Natural killer cell (primary cell): ENCODE measurements at regions of chr18 and their contacts with region 1.

Region 1: GRCh38 chr18:63161761-63162195 is 157.8 kb downstream of the BCL2 start:
- DNase-seq: peak; percentile 70 to 92
- ATAC-seq: peak; percentile 83 to 90 (median 87)
- H3K4me3 ChIP-seq: no peak overlapping the region
- H3K4me3 Mint-ChIP-seq: peak overlapping the region; percentile 77
- H3K27ac ChIP-seq: peak overlapping the region; percentile 97
- H3K27ac Mint-ChIP-seq: peak overlapping the region; percentile 93 to 96
- H3K4me1 ChIP-seq: peaks cover 60% of the 10 kb centered on the region
- H3K4me1 Mint-ChIP-seq: peaks cover 57 to 61% of the 10 kb centered on the region in 2 donors
- H3K27me3 ChIP-seq: no peaks in the 10 kb centered on the region
- H3K27me3 Mint-ChIP-seq: no peaks in the 10 kb centered on the region
- CTCF ChIP-seq: no peak

Region 2: DNA sequence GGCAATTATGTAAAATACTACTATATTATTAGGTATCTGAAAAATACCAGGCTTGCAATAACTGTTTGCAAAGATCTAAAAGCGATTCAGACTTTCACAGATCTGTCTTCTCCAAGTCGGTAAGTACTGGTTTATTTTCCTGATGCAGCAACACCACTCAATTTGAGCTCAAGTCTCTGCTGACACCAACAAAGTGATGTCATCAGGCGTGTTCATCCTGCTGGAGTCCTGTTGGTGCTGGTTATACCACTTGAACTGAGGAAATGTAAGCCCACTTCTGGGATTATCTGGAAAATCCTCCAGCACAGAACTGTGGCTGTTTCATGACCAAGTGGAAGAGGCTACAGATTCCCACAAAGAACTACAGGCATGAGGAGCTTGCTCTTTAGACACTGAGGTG is 109.8 kb before region 1 on chr18:
- intact Hi-C with region 1: loop called (anchors 2 kb)
- DNase-seq: no peak
- ATAC-seq: no peak
- H3K4me3 ChIP-seq: no peak overlapping the region
- H3K4me3 Mint-ChIP-seq: peak overlapping the region; percentile 83
- H3K27ac ChIP-seq: peak overlapping the region; percentile 68
- H3K27ac Mint-ChIP-seq: peak overlapping the region; percentile 87 to 92
- H3K4me1 ChIP-seq: peaks cover 34% of the 10 kb centered on the region
- H3K4me1 Mint-ChIP-seq: peaks cover 42 to 43% of the 10 kb centered on the region in 2 donors
- H3K27me3 ChIP-seq: no peaks in the 10 kb centered on the region
- H3K27me3 Mint-ChIP-seq: no peaks in the 10 kb centered on the region
- CTCF ChIP-seq: no peak

Region 3: GRCh38 chr18:63192885-63193349 is 31.1 kb after region 1 on chr18:
- intact Hi-C with region 1: loop called (anchors 1 kb)
- DNase-seq: peak in 1 of 2 donors; percentile 41
- ATAC-seq: peak; percentile 75 to 87 (median 80)
- H3K4me3 ChIP-seq: no peak overlapping the region
- H3K4me3 Mint-ChIP-seq: peak overlapping the region; percentile 26
- H3K27ac ChIP-seq: peak overlapping the region; percentile 41
- H3K27ac Mint-ChIP-seq: peak overlapping the region; percentile 82 to 90
- H3K4me1 ChIP-seq: peaks cover 16% of the 10 kb centered on the region
- H3K4me1 Mint-ChIP-seq: peaks cover 19% of the 10 kb centered on the region in 2 donors
- H3K27me3 ChIP-seq: no peaks in the 10 kb centered on the region
- H3K27me3 Mint-ChIP-seq: no peaks in the 10 kb centered on the region
- CTCF ChIP-seq: no peak